ENCODE measurements at regions of chr5 and their contacts with region 1.

Region 1: DNA sequence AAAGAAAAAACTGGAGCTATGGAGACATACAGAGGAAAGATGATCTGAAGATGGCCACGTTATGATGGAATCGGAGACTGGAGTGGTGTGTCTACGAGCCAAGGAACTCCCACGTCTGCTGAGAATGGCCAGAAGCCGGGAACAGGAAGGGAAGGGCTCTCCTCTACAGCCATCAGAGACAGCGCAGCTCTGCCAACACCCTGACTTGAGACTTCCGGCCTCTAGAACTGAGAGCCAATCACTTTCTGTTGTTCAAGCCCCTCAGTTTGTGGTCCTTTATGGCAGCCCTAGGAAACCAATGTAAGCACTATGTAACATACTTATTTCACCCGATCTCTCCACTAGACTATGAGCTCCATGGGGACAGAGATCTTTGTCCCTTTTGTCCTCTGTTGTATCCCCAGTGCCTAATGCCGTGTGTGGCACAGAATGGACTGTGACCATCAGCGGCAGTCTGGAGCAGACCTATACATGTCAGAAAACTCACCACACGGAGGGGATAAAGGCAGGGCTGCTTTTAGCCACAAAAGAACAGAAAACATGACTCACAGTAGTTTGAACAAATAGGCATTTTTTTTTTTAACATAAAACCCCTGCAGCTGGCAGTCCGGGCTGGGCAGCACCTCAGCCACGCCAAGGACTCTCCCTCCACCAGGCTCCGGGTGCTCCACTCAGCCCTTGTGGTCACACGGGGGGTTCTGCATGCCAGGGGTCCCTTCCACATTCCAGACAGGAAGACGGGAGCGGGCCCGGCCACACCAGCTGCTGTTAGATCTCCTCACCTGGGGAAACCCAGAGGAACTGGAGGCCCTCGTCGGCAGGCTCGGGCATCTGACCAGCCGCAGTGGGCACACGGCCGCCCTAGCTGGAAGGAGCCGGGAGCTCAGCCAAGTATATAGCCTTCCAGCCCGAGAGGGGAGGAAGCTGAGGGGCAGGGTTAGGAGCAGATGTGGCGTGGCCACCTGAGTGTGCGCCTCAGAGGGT is 16.1 kb upstream of the MXD3 start:
- DNase-seq: peak; percentile 71
- ATAC-seq: peak; percentile 87
- H3K4me3 ChIP-seq: no peak overlapping the region
- H3K27ac ChIP-seq: no peak overlapping the region
- H3K4me1 ChIP-seq: peaks cover 20% of the 10 kb centered on the region
- H3K27me3 ChIP-seq: no peaks in the 10 kb centered on the region
- CTCF ChIP-seq: peak; percentile 38; the same call in 1 of the 2 replicates

Region 2: DNA sequence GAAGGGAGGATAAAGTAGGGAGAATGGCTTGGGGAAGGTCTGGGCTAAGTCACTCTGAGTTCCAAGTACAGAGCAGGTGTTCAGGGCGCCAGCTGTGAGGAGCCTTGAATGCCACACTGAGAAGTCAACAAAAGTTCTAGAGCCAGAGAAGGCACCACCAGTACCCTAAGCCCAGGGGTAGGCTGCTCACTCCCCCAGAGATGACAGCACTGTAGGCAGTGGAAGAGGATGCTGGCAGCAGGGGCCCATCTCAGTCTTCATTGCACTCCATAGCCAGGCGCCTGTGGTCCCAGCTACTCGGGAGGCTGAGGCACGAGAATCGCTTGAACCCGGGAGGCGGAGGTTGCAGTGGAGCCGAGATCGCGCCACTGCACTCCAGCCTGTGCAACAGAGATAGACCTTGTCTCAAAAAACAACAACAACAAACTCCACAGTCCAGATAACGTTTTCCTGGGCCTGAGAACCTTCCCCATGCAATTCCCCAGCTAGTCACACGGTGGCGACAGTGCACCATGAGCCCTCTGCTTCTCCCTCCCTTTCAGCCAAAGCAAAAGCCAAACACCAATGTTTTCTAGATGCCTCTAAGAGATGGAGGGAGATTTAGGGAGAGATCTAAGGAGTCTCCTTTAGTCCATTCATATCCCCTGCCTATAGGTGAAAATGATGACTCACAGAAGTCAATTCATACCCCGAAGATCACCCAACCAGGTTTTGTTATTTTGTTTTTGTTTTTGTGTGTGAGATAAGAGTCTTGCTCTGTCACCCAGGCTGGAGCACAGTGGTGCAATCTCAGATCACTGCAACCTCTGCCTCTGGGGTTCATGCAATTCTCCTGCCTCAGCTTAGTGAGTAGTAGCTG is 214.0 kb before region 1 on chr5:
- CTCF ChIA-PET with region 1: no interaction called
- POLR2A ChIA-PET with region 1: no interaction called
- intact Hi-C with region 1: no loop called
- DNase-seq: peak; percentile 89
- ATAC-seq: peak; percentile 77
- H3K4me3 ChIP-seq: no peak overlapping the region
- H3K27ac ChIP-seq: no peak overlapping the region
- H3K4me1 ChIP-seq: no peaks in the 10 kb centered on the region
- H3K27me3 ChIP-seq: no peaks in the 10 kb centered on the region
- CTCF ChIP-seq: peak; percentile 98

Region 3: GRCh38 chr5:177351385-177352329 is 23.8 kb after region 1 on chr5 and contains the start of gene LMAN2:
- CTCF ChIA-PET with region 1: interaction called, 11 read pairs
- POLR2A ChIA-PET with region 1: interaction called, 3 read pairs
- intact Hi-C with region 1: no loop called
- DNase-seq: peak; percentile 94
- ATAC-seq: peak; percentile 94
- H3K4me3 ChIP-seq: peak within 1 kb of the TSS; percentile 93
- H3K27ac ChIP-seq: peak within 1 kb of the TSS; percentile 93
- H3K4me1 ChIP-seq: peaks cover 36% of the 10 kb centered on the region
- H3K27me3 ChIP-seq: no peaks in the 10 kb centered on the region
- CTCF ChIP-seq: no peak
- total RNA-seq, gene LMAN2: 310 and 369 TPM in 2 replicates

Measured in PC-3 (cell line).